ENCODE measurements at regions of chr7 and their contacts with region 1.

Region 1: DNA sequence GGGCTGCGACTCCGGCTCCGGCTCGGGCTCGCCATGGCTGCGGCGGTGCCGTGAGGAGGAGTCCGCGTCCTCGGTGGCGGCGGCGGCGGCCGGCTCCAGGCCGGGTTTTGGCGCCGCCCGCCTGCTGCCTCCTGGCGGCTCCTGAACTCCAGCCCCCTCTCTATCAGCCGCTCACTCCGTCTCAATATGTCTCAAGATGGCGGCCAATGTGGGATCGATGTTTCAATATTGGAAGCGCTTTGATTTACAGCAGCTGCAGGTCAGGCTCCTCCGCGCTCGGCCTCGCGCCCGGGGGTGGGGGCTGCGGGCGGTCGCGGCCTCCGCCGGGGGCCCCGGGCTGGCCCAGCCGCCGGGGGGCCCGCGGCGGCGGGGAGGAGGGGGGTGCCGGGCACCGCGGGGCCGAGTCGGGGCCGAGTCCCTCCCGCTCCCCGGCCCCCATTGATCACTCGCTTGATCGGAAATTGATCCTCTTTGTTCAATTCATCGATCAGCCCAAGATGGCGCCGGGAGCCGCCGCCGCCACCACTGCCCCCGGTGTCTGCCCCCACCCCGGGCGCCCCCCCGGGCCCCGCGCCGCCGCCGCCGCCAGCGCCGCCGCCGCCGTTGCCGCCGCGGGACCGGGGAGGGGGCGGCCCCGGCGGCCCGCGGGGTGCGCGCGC is 1.5 kb upstream of the CUX1 start:
- DNase-seq: peak; percentile 72 to 74
- H3K4me3 ChIP-seq: peak overlapping the region; percentile 62 to 89
- H3K27ac ChIP-seq: peak overlapping the region; percentile 85 to 88
- H3K4me1 ChIP-seq: no peaks in the 10 kb centered on the region
- H3K27me3 ChIP-seq: no peaks in the 10 kb centered on the region
- CTCF ChIP-seq: peak in 2 of 4 experiments; percentile 10 to 42
- POLR2A ChIP-seq: peak in 1 of 2 donors; percentile 20

Region 2: DNA sequence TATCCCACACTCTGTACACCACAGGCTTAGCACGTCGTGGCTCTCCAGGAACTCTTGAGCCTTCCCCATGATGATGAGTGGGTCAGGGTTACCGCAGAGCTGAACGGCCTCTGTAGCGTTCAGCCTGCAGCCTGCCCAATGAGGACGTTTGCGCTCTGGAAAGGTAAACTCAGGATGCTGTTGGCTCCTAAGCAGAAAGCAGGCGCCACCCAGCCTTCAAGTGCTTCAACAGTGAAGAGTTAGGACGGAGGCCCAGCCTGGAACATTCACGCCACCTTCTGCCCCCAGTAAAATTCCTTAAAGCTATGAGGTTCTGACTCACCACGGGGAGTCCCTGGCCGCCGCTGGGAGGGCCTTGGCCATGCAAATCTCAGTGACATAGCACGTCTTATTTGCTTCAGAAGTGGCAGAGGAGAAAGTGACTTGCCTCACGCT is 309.2 kb after region 1 on chr7:
- intact Hi-C with region 1: loop called (anchors 10 kb)
- DNase-seq: peak; percentile 67 to 82
- H3K4me3 ChIP-seq: no peak overlapping the region
- H3K27ac ChIP-seq: peak overlapping the region; percentile 77 to 81
- H3K4me1 ChIP-seq: peaks cover 0 to 4% of the 10 kb centered on the region in 2 donors
- H3K27me3 ChIP-seq: no peaks in the 10 kb centered on the region
- CTCF ChIP-seq: peak; percentile 16 to 31 (median 28)
- POLR2A ChIP-seq: no peak

Region 3: DNA sequence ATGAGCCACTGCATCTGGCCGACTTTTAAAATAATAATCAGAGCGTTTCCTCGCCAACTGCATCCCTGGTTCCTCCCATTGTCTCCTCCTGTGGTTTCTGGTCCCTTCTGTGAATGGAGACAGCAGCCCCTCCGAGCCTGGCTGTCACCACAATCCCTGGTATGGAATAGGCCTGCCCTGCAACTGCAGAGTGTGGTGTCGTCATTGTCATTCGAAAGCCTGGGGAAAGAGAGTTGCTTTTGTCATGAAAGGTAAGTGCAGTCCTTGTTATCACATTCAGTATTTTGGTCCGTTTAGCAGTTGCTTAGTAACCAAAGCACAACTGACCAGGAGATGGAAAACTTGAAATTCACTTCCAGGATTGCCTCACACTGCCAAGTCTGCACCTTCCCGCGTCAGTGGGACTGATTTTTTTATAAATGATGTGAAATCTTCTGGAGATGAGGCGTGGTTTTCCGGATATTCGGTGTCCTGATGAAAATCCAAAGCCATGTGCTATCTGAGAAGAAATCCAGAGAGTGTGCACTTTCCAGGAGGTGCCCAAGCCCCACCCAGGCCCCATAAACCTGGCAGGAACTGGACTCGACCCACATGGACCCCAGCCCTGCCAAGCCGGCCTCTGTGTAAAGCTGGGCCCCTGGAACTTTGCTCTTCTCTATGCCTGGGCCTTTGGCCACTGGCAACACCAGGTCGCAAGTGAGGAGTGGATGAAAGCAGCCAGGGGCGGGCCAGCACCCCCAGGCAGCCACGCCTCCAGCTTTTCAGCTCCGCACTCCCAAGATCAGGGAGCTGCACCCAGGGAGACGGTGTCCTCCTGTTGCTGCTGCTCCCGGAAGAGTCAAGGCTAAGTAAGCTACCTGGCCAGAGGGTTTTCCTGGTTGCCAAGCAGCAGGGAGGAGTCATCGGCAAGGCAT is 337.0 kb after region 1 on chr7:
- intact Hi-C with region 1: no loop called
- DNase-seq: peak; percentile 36 to 42
- H3K4me3 ChIP-seq: no peak overlapping the region
- H3K27ac ChIP-seq: peak overlapping the region; percentile 46 to 55
- H3K4me1 ChIP-seq: peaks cover 0 to 5% of the 10 kb centered on the region in 2 donors
- H3K27me3 ChIP-seq: no peaks in the 10 kb centered on the region
- CTCF ChIP-seq: no peak
- POLR2A ChIP-seq: no peak